ENCODE measurements at regions of chr17 and their contacts with region 1.

Region 1: GRCh38 chr17:18141210-18141803 is 32.8 kb downstream of the MYO15A start:
- DNase-seq: no peak
- H3K4me3 Mint-ChIP-seq: no peak overlapping the region
- H3K27ac Mint-ChIP-seq: no peak overlapping the region
- H3K4me1 Mint-ChIP-seq: no peaks in the 10 kb centered on the region
- H3K27me3 Mint-ChIP-seq: no peaks in the 10 kb centered on the region

Region 2: DNA sequence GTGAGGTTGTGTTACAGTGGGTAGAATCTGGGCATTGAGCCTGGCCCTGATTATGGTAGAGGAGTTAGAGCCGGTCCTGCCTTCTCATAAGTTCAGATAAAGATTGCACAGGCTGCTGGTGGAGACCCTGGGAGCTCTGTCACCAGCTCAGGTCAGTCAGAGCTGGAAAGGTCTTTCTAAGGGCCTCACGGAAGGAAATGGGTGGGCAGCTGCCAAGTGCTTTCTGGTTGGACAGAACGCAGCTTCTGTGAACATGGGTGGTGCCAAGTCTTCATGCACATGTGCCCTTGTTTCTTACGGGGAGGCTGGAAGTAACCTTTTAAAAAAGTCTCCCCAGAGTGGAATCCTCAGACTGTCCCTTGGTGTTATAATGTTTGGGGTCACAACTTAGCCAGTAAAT is 57.2 kb after region 1 on chr17:
- CTCF ChIA-PET with region 1: interaction called, 12 read pairs
- POLR2A ChIA-PET with region 1: no interaction called
- intact Hi-C with region 1: no loop called
- DNase-seq: no peak
- H3K4me3 Mint-ChIP-seq: no peak overlapping the region
- H3K27ac Mint-ChIP-seq: peak overlapping the region; percentile 49
- H3K4me1 Mint-ChIP-seq: peaks cover 35% of the 10 kb centered on the region
- H3K27me3 Mint-ChIP-seq: no peaks in the 10 kb centered on the region

Region 3: GRCh38 chr17:18217412-18218015 is 76.2 kb after region 1 on chr17:
- CTCF ChIA-PET with region 1: interaction called, 24 read pairs
- POLR2A ChIA-PET with region 1: interaction called, 3 read pairs
- intact Hi-C with region 1: loop called (anchors 1 kb)
- DNase-seq: peak; percentile 87
- H3K4me3 Mint-ChIP-seq: no peak overlapping the region
- H3K27ac Mint-ChIP-seq: no peak overlapping the region
- H3K4me1 Mint-ChIP-seq: peaks cover 4% of the 10 kb centered on the region
- H3K27me3 Mint-ChIP-seq: no peaks in the 10 kb centered on the region